ENCODE measurements at regions of chr7 and their contacts with region 1.

Region 1: GRCh38 chr7:102279537-102280400 is 6.9 kb upstream of the SH2B2 start:
- DNase-seq: peak; percentile 74
- ATAC-seq: peak; percentile 91
- H3K4me3 Mint-ChIP-seq: no peak overlapping the region
- H3K27ac Mint-ChIP-seq: no peak overlapping the region
- H3K4me1 Mint-ChIP-seq: peaks cover 4% of the 10 kb centered on the region
- H3K27me3 Mint-ChIP-seq: peaks cover 2% of the 10 kb centered on the region
- CTCF ChIP-seq: peak; percentile 76

Region 2: GRCh38 chr7:102106625-102107024 is 173.1 kb before region 1 on chr7:
- CTCF ChIA-PET with region 1: no interaction called
- POLR2A ChIA-PET with region 1: no interaction called
- intact Hi-C with region 1: no loop called
- DNase-seq: no peak
- ATAC-seq: no peak
- H3K4me3 Mint-ChIP-seq: no peak overlapping the region
- H3K27ac Mint-ChIP-seq: no peak overlapping the region
- H3K4me1 Mint-ChIP-seq: no peaks in the 10 kb centered on the region
- H3K27me3 Mint-ChIP-seq: no peaks in the 10 kb centered on the region
- CTCF ChIP-seq: no peak

Region 3: DNA sequence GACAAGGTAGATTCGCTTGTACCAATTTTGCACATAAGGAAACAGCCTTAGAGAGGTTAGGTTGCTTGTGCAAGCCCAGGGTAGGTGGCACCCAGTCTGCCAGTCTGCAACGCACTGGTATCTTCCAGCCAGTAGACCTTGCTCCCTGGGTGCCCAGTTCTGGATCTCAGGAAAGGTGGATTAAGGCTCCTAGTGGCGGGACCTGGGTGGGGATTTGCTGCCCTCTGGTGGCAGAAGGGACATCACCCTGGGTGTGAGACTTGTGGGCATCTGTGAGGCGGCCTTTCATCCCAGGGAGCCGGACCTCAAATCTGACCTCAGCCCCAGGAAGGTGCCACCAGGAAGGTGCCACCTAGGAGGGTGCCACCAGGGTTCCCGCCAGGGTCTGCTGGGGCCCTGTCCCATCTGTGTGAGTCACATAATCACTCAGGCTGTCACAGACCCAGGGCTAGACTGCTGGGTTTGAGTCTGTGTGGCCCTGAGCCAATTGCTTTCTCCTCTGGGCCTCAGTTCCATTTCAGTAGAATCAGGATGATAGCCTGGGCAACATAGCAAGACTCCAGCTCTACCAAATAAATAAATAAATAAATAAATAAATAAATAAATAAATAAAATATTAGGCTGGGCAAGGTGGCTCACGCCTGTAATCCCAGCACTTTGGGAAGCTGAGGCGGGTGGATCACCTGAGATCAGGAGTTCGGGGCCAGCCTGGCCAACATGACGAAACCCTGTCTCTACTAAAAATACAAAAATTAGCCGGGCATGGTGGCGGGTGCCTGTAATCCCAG is 111.1 kb after region 1 on chr7:
- CTCF ChIA-PET with region 1: interaction called, 30 read pairs
- POLR2A ChIA-PET with region 1: no interaction called
- intact Hi-C with region 1: loop called (anchors 5 kb)
- DNase-seq: peak; percentile 78
- ATAC-seq: peak; percentile 75
- H3K4me3 Mint-ChIP-seq: no peak overlapping the region
- H3K27ac Mint-ChIP-seq: no peak overlapping the region
- H3K4me1 Mint-ChIP-seq: peaks cover 5% of the 10 kb centered on the region
- H3K27me3 Mint-ChIP-seq: no peaks in the 10 kb centered on the region
- CTCF ChIP-seq: peak; percentile 79

Region 4: GRCh38 chr7:102450242-102450641 is 170.5 kb after region 1 on chr7:
- CTCF ChIA-PET with region 1: no interaction called
- POLR2A ChIA-PET with region 1: no interaction called
- intact Hi-C with region 1: loop called (anchors 10 kb)
- DNase-seq: peak; percentile 68
- ATAC-seq: peak; percentile 84
- H3K4me3 Mint-ChIP-seq: no peak overlapping the region
- H3K27ac Mint-ChIP-seq: no peak overlapping the region
- H3K4me1 Mint-ChIP-seq: peaks cover 4% of the 10 kb centered on the region
- H3K27me3 Mint-ChIP-seq: no peaks in the 10 kb centered on the region
- CTCF ChIP-seq: peak; percentile 44